GM10248 (cell line): ENCODE measurements at regions of chr22 and their contacts with region 1.

Region 1: DNA sequence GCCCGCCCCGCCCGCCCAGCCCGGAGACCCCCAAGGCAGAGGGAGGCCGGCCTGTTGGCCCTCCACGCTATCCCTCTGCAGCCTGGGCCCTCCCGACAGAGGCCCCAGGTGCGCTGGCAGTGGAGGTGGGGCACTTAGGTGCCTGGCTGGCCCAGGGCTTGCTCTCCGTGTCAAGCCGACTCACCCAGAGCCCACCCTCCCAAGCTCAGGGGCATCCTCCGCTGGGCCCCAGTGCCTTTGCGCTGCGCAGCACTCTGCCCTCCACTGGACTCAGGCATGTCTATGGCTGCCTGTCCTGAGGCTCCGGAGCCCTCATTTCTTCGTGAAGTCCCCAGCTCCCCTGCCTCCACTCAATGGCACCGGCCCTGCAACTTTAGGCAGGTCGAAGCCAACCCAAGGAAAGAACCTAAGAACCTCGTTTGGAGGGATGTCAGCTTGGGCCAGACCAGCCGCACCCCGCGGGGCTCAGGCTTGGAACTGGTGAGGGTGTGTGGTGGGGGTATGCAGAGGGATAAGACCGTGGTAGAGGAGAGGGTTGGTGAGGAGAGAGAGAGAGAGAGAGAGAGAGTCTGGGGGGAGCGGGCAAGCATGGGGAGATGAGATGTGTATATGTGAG is 6.1 kb downstream of the SMIM45 start:
- DNase-seq: no peak
- CTCF ChIP-seq: no peak

Region 2: DNA sequence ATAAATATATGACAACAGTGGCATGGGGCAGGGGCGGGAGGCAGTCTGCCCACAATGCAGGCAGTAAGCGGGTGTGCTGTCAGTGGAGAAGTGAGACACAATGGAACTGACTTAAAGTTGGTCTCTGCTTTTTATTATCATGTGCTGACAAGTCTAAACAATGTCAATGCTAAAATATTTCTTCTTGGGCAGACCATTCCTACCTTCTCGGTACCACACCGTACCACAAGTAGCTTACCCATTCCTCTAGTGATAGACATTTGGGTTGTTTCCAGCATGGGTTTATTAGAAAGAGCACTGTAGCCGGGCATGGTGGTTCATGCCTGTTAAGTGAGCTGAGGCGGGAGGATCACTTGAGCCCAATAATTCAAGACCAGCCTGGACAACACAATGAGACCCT is 714.7 kb before region 1 on chr22:
- CTCF ChIA-PET with region 1: no interaction called
- POLR2A ChIA-PET with region 1: interaction called, 10 read pairs
- DNase-seq: no peak
- CTCF ChIP-seq: no peak

Region 3: DNA sequence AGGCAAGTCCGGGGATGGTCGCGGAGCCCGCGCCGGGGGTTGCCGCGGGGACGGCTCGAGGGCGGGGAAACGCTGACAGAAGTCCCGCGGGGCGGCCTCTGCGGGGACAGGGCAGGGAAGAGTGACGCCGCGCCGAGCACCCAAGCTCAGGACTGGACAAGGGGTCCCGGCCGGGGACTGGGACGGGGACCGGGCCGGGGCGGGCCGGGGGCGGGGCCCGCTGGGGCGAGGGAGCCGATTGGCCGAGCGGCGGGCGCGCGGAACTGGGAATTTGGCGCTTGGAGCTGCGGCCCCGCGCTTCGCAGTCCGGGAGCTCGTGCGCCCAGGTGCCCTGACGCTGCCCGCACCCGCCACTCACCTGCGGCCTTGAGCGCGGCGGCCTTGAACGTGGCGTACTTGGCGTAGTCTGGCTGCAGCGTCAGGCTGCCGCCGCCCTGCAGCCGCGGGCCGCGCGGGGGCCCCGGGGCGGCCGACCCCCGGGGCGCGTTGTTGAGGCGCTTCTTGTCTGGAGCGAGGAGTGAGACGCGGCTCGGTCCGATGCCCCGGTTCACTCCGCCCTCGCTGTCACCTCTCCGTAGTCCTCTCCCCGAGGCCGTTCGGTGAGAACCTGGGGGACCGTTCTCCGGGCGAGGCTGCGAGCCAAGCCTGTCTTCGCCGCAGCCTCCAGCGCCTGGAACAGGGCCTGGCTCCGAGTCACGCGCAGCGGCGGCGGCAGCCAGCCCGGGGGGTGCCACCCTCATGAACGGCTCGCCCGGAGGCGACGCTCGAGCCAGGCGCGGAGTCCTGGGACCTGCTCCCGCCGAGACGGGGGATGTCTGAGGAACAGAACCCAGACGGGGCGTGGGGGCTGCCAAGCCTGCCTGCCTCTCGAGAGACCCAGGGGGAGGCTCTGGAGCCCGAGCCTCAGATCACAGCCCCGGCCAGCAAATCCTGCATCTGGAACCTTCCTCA is 47.7 kb before region 1 on chr22:
- CTCF ChIA-PET with region 1: no interaction called
- POLR2A ChIA-PET with region 1: no interaction called
- DNase-seq: no peak
- CTCF ChIP-seq: no peak

Region 4: DNA sequence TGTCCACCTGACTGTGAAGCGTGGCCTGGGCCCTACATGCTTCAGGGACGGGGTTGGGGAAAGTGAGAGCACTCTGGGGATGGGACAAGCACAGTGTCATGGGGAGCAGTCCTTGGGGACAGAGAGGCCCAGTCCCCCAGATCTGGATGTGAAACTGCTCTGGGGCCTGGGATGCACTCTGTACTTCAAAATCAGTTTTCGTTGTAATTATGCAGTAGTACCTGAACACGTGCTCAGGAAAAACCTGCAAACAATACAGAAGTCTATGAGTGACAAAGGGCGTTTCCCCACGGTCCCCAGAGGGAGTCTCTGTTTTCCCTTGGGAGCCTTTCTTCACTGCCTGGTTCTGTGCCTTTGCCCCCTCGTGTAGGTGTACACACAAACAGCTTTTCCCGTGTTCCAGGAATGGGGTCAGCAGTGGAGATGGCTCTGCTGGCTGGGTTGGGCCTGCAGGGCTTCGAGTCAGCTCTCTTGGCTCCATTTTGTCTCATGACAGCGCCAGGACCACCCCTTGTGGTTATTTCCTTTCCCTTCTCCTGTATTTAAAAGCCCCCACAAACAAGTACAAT is 26.3 kb before region 1 on chr22:
- CTCF ChIA-PET with region 1: no interaction called
- POLR2A ChIA-PET with region 1: no interaction called
- DNase-seq: no peak
- CTCF ChIP-seq: no peak

Region 5: GRCh38 chr22:41946629-41947423 is 11.2 kb before region 1 on chr22 and contains the start of gene CENPM:
- CTCF ChIA-PET with region 1: interaction called, 13 read pairs
- POLR2A ChIA-PET with region 1: no interaction called
- DNase-seq: peak; percentile 90
- CTCF ChIP-seq: no peak